Natural killer cell (primary cell): ENCODE measurements at regions of chr4 and their contacts with region 1.

Region 1: GRCh38 chr4:173415885-173416653 is 17.2 kb upstream of the SCRG1 start:
- DNase-seq: peak in 1 of 2 donors; percentile 12
- ATAC-seq: peak in 1 of 3 donors; percentile 55
- H3K4me3 ChIP-seq: no peak overlapping the region
- H3K4me3 Mint-ChIP-seq: peak overlapping the region; percentile 21
- H3K27ac ChIP-seq: peak overlapping the region; percentile 20
- H3K27ac Mint-ChIP-seq: no peak overlapping the region
- H3K4me1 ChIP-seq: peaks cover 5% of the 10 kb centered on the region
- H3K4me1 Mint-ChIP-seq: peaks cover 0 to 4% of the 10 kb centered on the region in 2 donors
- H3K27me3 ChIP-seq: no peaks in the 10 kb centered on the region
- H3K27me3 Mint-ChIP-seq: no peaks in the 10 kb centered on the region
- CTCF ChIP-seq: no peak

Region 2: GRCh38 chr4:173013232-173013930 is 402.7 kb before region 1 on chr4:
- intact Hi-C with region 1: loop called (anchors 1 kb)
- DNase-seq: peak; percentile 27 to 71
- ATAC-seq: peak; percentile 63 to 71 (median 69)
- H3K4me3 ChIP-seq: no peak overlapping the region
- H3K4me3 Mint-ChIP-seq: no peak overlapping the region
- H3K27ac ChIP-seq: no peak overlapping the region
- H3K27ac Mint-ChIP-seq: no peak overlapping the region
- H3K4me1 ChIP-seq: no peaks in the 10 kb centered on the region
- H3K4me1 Mint-ChIP-seq: no peaks in the 10 kb centered on the region
- H3K27me3 ChIP-seq: no peaks in the 10 kb centered on the region
- H3K27me3 Mint-ChIP-seq: no peaks in the 10 kb centered on the region
- CTCF ChIP-seq: peak; percentile 73

Region 3: GRCh38 chr4:173025131-173025530 is 390.9 kb before region 1 on chr4:
- intact Hi-C with region 1: loop called (anchors 5 kb)
- DNase-seq: peak in 1 of 2 donors; percentile 63
- ATAC-seq: peak in 2 of 3 donors; percentile 29 to 60
- H3K4me3 ChIP-seq: no peak overlapping the region
- H3K4me3 Mint-ChIP-seq: no peak overlapping the region
- H3K27ac ChIP-seq: no peak overlapping the region
- H3K27ac Mint-ChIP-seq: no peak overlapping the region
- H3K4me1 ChIP-seq: no peaks in the 10 kb centered on the region
- H3K4me1 Mint-ChIP-seq: peaks cover 0 to 5% of the 10 kb centered on the region in 2 donors
- H3K27me3 ChIP-seq: no peaks in the 10 kb centered on the region
- H3K27me3 Mint-ChIP-seq: peaks cover 0 to 2% of the 10 kb centered on the region in 2 donors
- CTCF ChIP-seq: peak; percentile 19

Region 4: DNA sequence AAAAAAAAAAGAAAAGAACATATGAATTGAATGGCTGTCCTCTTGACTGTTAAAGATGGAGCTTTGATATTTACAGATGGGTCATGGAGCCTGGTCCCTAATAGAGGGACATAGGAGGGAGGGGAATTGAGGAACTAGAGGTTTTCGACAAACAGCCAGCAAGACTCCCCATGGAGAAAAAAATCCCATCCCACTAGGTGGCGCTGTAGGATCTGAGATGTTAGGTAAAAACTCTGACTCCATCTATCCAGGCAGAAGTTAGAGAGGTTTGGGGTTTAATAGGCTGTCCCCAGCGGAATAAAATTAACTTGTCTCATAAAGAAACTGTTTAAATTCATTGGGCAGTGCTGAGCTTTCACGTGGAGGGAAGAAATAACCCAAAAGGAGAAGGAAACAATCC is 127.8 kb before region 1 on chr4:
- intact Hi-C with region 1: loop called (anchors 1 kb)
- DNase-seq: peak; percentile 29 to 79
- ATAC-seq: peak in 1 of 3 donors; percentile 68
- H3K4me3 ChIP-seq: no peak overlapping the region
- H3K4me3 Mint-ChIP-seq: no peak overlapping the region
- H3K27ac ChIP-seq: no peak overlapping the region
- H3K27ac Mint-ChIP-seq: no peak overlapping the region
- H3K4me1 ChIP-seq: no peaks in the 10 kb centered on the region
- H3K4me1 Mint-ChIP-seq: peaks cover 10 to 17% of the 10 kb centered on the region in 2 donors
- H3K27me3 ChIP-seq: no peaks in the 10 kb centered on the region
- H3K27me3 Mint-ChIP-seq: no peaks in the 10 kb centered on the region
- CTCF ChIP-seq: peak; percentile 44

Region 5: GRCh38 chr4:173318648-173319211 is 97.3 kb before region 1 on chr4:
- intact Hi-C with region 1: loop called (anchors 1 kb)
- DNase-seq: peak in 1 of 2 donors; percentile 66
- ATAC-seq: peak in 2 of 3 donors; percentile 62 to 67
- H3K4me3 ChIP-seq: no peak overlapping the region
- H3K4me3 Mint-ChIP-seq: no peak overlapping the region
- H3K27ac ChIP-seq: no peak overlapping the region
- H3K27ac Mint-ChIP-seq: no peak overlapping the region
- H3K4me1 ChIP-seq: no peaks in the 10 kb centered on the region
- H3K4me1 Mint-ChIP-seq: no peaks in the 10 kb centered on the region
- H3K27me3 ChIP-seq: no peaks in the 10 kb centered on the region
- H3K27me3 Mint-ChIP-seq: no peaks in the 10 kb centered on the region
- CTCF ChIP-seq: peak; percentile 71

Region 6: DNA sequence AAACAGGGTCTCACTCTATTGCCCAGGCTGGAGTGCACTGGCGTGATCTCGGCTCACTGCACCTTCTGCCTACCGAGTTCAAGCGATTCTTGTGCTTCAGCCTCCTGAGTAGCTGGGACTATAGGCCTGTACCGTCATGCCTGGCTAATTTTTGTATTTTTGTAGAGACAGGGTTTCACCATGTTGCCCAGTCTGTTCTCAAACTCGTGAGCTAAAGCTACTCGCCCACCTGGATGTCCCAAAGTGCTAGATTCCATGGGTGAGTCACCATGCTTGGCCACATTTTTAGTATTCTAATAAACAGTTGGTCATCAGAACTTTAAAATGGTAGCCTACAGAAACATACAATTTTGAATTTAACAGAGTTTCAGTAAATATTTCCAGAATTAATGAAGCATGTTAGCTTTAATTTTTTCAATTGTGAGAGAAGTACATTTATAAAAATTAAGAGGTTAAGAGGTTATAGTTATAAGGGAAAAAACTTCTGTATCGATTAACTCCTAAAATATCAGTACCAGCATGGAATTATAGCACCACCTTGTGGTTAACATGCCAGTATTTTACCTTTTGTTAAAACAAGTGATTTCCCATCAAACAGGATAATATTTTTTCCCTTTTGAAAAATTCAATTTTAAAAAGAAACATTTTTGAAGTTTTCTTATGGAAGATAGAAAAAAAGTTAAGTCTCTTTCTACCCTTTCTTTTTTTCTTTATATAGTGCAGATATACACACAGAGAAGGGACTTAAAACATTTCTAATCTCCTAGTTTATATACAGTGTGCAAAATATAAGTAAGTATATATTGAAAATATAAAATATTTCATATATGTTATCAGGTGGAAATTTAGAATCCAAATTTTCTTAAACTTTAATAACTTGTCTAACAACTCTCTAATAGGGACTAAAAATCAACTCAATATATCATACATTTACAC is 903.0 kb after region 1 on chr4:
- intact Hi-C with region 1: loop called (anchors 5 kb)
- DNase-seq: peak in 1 of 2 donors; percentile 66
- ATAC-seq: no peak
- H3K4me3 ChIP-seq: no peak overlapping the region
- H3K4me3 Mint-ChIP-seq: no peak overlapping the region
- H3K27ac ChIP-seq: no peak overlapping the region
- H3K27ac Mint-ChIP-seq: no peak overlapping the region
- H3K4me1 ChIP-seq: no peaks in the 10 kb centered on the region
- H3K4me1 Mint-ChIP-seq: no peaks in the 10 kb centered on the region
- H3K27me3 ChIP-seq: no peaks in the 10 kb centered on the region
- H3K27me3 Mint-ChIP-seq: no peaks in the 10 kb centered on the region
- CTCF ChIP-seq: peak; percentile 76